Activated CD4-positive, alpha-beta T cell treated with anti-CD3 and anti-CD28 coated beads for 36 hours (primary cell): ENCODE measurements at regions of chr1 and their contacts with region 1.

Region 1: GRCh38 chr1:94417978-94418663 is at the start of gene ABCD3:
- DNase-seq: peak; percentile 98
- ATAC-seq: peak; percentile 91
- H3K4me3 Mint-ChIP-seq: no peak within 1 kb of the TSS
- H3K27ac Mint-ChIP-seq: peak within 1 kb of the TSS; percentile 87
- H3K4me1 Mint-ChIP-seq: peaks cover 29% of the 10 kb centered on the region
- H3K27me3 Mint-ChIP-seq: peaks cover 6% of the 10 kb centered on the region
- total RNA-seq, gene ABCD3: 46.1 to 67.1 TPM

Region 2: GRCh38 chr1:93878889-93879586 is 539.1 kb before region 1 on chr1 and contains the start of gene DNTTIP2:
- CTCF ChIA-PET with region 1: no interaction called
- POLR2A ChIA-PET with region 1: no interaction called
- intact Hi-C with region 1: loop called in 1 of 2 experiments (anchors 1 kb)
- DNase-seq: peak; percentile 94
- ATAC-seq: peak; percentile 93
- H3K4me3 Mint-ChIP-seq: peak within 1 kb of the TSS; percentile 92
- H3K27ac Mint-ChIP-seq: peak within 1 kb of the TSS; percentile 97
- H3K4me1 Mint-ChIP-seq: peaks cover 45% of the 10 kb centered on the region
- H3K27me3 Mint-ChIP-seq: no peaks in the 10 kb centered on the region
- total RNA-seq, gene DNTTIP2: 82.8 to 84.9 TPM

Region 3: DNA sequence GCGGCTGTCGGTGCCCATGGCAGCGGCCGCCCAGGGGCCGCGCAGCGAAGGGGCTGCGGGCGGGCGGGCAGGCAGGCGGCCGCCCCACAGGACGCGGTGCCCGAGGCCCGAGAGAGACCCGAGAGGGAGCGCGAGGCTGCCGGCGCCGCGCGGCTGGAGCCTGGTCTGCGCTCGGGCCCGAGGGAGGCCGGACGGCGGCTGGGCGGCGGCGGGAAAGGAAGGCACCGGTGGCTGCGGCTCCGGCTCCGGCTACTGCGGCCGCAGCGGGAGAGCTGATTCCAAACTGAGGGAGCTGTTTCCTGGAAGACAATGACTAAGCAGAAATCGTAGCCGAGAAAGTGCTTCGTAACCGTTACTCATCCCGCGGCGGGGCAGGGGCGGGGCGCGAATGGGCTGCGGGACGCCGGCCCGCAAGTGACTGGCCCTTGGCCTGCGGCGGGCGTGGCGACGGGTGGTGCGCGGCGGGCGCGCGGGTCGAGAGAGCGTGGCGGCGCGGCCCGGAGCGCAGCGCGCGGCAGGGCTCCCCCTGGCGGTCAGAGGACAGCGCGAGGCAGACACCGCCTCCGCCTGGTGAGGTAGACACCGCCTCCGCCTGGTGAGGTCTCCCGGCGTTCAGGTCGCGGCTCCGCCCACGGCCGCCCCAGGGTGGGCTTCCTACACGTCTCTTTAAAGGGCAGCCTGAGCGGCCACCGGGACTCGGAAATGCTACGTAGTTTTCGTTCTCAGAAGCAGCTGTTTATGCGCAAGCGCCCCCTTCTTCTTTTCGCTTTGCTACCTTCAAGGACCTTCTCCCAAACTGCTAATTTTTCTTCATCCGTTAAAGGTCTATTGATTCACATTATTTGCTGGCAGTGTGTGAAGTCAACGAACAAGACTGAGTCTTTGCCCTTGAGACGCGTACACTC is 508.7 kb before region 1 on chr1 and contains the start of gene GCLM:
- CTCF ChIA-PET with region 1: no interaction called
- POLR2A ChIA-PET with region 1: no interaction called
- intact Hi-C with region 1: loop called in 1 of 2 experiments (anchors 1 kb)
- DNase-seq: peak; percentile 93
- ATAC-seq: peak; percentile 84
- H3K4me3 Mint-ChIP-seq: peak within 1 kb of the TSS; percentile 96
- H3K27ac Mint-ChIP-seq: peak within 1 kb of the TSS; percentile 97
- H3K4me1 Mint-ChIP-seq: peaks cover 34% of the 10 kb centered on the region
- H3K27me3 Mint-ChIP-seq: peaks cover 5% of the 10 kb centered on the region
- total RNA-seq, gene GCLM: 12.8 to 19.2 TPM

Region 4: GRCh38 chr1:94237291-94238226 is 180.6 kb before region 1 on chr1 and contains the start of gene ARHGAP29:
- CTCF ChIA-PET with region 1: no interaction called
- POLR2A ChIA-PET with region 1: no interaction called
- intact Hi-C with region 1: loop called in 1 of 2 experiments (anchors 1 kb)
- DNase-seq: peak; percentile 84
- ATAC-seq: peak; percentile 97
- H3K4me3 Mint-ChIP-seq: peak within 1 kb of the TSS; percentile 56
- H3K27ac Mint-ChIP-seq: no peak within 1 kb of the TSS
- H3K4me1 Mint-ChIP-seq: peaks cover 13% of the 10 kb centered on the region
- H3K27me3 Mint-ChIP-seq: peaks cover 70% of the 10 kb centered on the region
- total RNA-seq, gene ARHGAP29: 0.21 to 0.23 TPM

Region 5: GRCh38 chr1:94383966-94384408 is 34.1 kb before region 1 on chr1:
- CTCF ChIA-PET with region 1: interaction called, 13 read pairs
- POLR2A ChIA-PET with region 1: interaction called, 7 read pairs
- intact Hi-C with region 1: loop called (anchors 1 kb)
- DNase-seq: peak; percentile 22
- ATAC-seq: peak; percentile 76
- H3K4me3 Mint-ChIP-seq: peak overlapping the region; percentile 61
- H3K27ac Mint-ChIP-seq: peak overlapping the region; percentile 92
- H3K4me1 Mint-ChIP-seq: peaks cover 62% of the 10 kb centered on the region
- H3K27me3 Mint-ChIP-seq: no peaks in the 10 kb centered on the region

Region 6: DNA sequence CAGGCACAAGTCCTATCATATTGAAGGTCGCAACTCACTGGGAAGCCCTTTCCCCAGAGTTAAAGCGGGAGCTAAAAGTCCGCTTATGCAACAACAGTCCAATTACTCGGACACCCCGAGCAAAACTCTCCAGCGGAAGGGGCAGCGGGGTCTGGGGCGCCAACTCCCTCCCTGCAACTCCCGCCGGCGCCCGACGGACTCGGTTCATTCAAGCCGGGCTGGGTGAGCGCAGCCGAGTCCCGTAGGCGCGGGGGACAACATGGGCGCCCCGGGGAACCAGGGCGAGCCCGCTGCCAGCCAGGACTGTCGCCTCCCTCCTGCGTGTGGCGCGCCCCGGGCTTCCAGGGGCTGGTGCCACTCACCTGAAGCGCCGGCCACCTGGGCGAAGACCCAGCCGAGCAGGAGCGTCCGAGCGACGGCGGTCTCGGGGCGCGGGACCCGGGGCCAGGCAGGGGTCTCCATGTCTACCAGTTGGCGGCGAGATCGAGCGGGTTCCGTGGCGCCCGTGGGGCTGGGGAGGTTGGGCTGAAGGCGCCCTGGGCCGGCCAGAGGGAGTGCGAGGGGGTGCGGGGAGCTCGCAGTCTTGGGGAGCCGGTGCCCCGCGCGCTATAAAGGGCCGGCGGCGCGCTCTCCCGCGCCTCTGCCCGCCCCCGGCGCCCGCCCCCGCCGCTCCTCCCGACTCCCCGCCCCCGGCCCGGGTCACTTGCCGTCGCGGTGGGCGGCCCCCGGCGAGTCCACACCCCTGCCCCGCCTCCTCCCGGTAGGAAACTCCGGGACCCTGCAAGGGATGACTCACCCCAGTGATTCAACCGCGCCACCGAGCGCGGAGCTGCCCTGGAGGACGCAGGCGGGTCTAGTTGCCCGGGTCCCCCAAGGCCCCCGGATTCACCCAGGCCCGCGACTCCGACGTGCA is 123.3 kb after region 1 on chr1 and contains the start of gene F3:
- CTCF ChIA-PET with region 1: no interaction called
- POLR2A ChIA-PET with region 1: no interaction called
- intact Hi-C with region 1: loop called in 1 of 2 experiments (anchors 1 kb)
- DNase-seq: peak; percentile 90
- ATAC-seq: peak; percentile 98
- H3K4me3 Mint-ChIP-seq: peak within 1 kb of the TSS; percentile 68
- H3K27ac Mint-ChIP-seq: no peak within 1 kb of the TSS
- H3K4me1 Mint-ChIP-seq: peaks cover 13% of the 10 kb centered on the region
- H3K27me3 Mint-ChIP-seq: peaks cover 64% of the 10 kb centered on the region
- total RNA-seq, gene F3: 0.07 TPM in 1 of 2 experiments, not detected in the other

Region 7: GRCh38 chr1:94672934-94673333 is 254.8 kb after region 1 on chr1:
- CTCF ChIA-PET with region 1: no interaction called
- POLR2A ChIA-PET with region 1: no interaction called
- intact Hi-C with region 1: no loop called
- DNase-seq: no peak
- ATAC-seq: no peak
- H3K4me3 Mint-ChIP-seq: no peak overlapping the region
- H3K27ac Mint-ChIP-seq: no peak overlapping the region
- H3K4me1 Mint-ChIP-seq: no peaks in the 10 kb centered on the region
- H3K27me3 Mint-ChIP-seq: peaks cover 6% of the 10 kb centered on the region

Region 8: DNA sequence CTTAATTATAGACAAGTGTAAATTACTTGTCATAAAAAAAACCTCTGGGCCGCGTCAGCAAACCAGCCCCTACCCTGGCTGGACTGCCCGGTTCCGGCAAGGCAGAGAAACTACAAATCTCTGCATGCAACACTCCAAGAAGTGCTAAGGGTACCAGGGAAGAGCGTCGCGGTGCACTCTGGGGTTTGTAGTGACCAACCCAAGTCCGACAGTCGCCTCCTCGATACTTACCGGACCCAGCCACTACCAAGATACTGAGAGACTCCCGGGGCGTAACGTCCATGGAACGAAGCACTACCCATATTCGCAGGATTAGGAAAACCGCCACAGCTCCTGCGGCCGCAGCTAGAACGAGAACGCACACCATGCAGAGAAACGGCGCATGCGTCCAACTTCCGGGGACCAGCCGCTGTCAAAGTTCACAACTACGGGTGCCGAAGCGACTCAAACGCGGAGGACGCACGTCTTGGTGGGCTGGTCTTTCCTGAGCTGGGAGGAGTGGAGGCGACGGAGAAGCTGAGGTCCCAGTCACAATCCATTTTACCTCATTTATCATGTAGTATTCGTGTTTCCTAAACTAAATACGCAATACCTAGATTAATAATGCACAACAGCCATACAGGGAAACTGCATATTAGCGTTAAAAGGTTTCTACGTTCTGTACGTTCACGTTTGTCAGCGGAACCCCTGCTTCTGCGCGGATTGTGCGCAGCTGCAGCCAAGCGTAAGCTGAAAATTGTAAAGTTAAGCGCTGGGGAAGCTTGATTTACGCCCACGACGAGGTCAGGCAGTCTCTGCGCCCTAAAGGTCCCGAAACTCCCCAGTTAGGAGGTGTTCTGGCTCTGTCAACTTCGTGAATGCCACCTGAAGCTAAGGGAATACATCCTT is 654.7 kb after region 1 on chr1 and contains the start of gene ALG14:
- CTCF ChIA-PET with region 1: no interaction called
- POLR2A ChIA-PET with region 1: no interaction called
- intact Hi-C with region 1: loop called in 1 of 2 experiments (anchors 2 kb)
- DNase-seq: peak; percentile 95
- ATAC-seq: peak; percentile 97
- H3K4me3 Mint-ChIP-seq: peak within 1 kb of the TSS; percentile 91
- H3K27ac Mint-ChIP-seq: peak within 1 kb of the TSS; percentile 98
- H3K4me1 Mint-ChIP-seq: peaks cover 17% of the 10 kb centered on the region
- H3K27me3 Mint-ChIP-seq: peaks cover 2% of the 10 kb centered on the region
- total RNA-seq, gene ALG14: 5.3 to 7.3 TPM

Region 9: DNA sequence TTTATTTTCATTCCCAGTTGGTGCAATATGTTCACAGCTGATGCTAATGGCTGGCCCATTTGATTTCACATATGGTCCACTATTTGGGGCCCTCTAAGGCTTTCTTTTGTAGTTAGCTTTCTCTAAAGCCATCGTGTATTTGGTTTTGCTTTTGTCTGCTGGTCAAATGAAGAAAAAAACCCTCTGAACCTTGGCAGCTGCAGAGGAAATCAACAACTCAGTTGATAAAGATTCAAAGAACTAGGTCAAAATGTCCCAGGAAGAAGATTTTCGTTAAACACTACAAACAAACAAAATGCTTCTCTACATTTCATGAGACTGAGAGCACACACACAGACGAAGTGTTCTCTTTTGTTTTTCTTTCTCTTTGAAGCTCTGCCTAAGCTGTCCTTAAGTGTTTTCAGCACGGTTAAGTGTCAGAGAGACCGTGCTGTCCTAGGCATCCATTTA is 1470.8 kb after region 1 on chr1:
- CTCF ChIA-PET with region 1: no interaction called
- POLR2A ChIA-PET with region 1: no interaction called
- intact Hi-C with region 1: no loop called
- DNase-seq: no peak
- ATAC-seq: no peak
- H3K4me3 Mint-ChIP-seq: no peak overlapping the region
- H3K27ac Mint-ChIP-seq: no peak overlapping the region
- H3K4me1 Mint-ChIP-seq: no peaks in the 10 kb centered on the region
- H3K27me3 Mint-ChIP-seq: no peaks in the 10 kb centered on the region